PC-3 (cell line): ENCODE measurements at regions of chr14 and their contacts with region 1.

Region 1: GRCh38 chr14:54676812-54677708 is 110.1 kb downstream of the SAMD4A start:
- DNase-seq: peak; percentile 99
- ATAC-seq: peak; percentile 95
- H3K4me3 ChIP-seq: peak overlapping the region; percentile 46
- H3K27ac ChIP-seq: peak overlapping the region; percentile 80
- H3K4me1 ChIP-seq: peaks cover 49% of the 10 kb centered on the region
- H3K27me3 ChIP-seq: no peaks in the 10 kb centered on the region
- CTCF ChIP-seq: no peak

Region 2: DNA sequence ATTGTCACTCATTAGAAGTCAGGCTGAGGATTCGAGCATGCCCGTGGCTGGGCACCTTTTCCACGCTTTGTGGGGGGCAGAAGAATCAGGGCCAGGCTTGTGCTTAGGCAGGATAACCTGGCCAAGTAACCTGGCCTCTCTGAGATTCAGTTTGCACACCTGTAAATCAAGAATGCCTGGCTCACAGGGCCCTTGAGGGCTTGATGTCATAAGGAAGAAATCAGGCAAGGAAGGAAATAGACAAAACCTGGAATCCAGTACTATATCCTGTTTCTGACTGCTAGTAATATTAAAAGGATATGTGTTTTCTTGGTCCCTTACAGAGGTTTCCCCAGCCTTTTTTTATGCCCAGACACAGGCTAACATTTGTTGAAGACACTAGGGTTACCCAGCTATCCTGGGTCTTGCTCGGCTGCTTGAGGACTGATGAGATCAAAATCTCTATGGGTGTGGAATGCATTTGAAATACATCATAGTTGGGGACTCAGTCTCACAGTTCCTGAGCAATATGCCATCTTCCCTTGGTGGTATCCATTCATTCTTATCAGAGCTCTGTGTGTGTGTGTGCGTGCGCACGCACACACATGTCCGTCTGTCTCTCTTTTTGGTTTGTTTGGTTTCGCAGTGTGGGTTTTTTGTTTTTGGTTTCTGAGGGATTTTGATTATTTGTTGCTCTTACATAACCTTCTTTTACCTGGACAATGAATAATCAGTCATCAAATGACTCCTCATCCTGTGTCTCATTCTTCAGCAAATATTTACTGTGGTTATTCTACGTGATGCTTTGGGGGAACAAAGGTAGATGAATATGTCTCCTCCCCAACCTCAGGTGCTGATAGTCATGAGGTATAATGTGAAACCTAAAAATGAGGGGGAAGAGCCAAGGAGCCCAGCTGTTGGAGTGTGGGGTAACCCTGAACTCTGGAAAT is 18.0 kb before region 1 on chr14:
- CTCF ChIA-PET with region 1: no interaction called
- POLR2A ChIA-PET with region 1: interaction called, 6 read pairs
- intact Hi-C with region 1: loop called (anchors 1 kb)
- DNase-seq: peak; percentile 100
- ATAC-seq: peak; percentile 93
- H3K4me3 ChIP-seq: peak overlapping the region; percentile 5; the same call in 1 of the 2 replicates
- H3K27ac ChIP-seq: peak overlapping the region; percentile 87
- H3K4me1 ChIP-seq: peaks cover 41% of the 10 kb centered on the region
- H3K27me3 ChIP-seq: no peaks in the 10 kb centered on the region
- CTCF ChIP-seq: no peak

Region 3: GRCh38 chr14:54756656-54757392 is 79.8 kb after region 1 on chr14:
- CTCF ChIA-PET with region 1: no interaction called
- POLR2A ChIA-PET with region 1: no interaction called
- intact Hi-C with region 1: no loop called
- DNase-seq: no peak
- ATAC-seq: no peak
- H3K4me3 ChIP-seq: no peak overlapping the region
- H3K27ac ChIP-seq: no peak overlapping the region
- H3K4me1 ChIP-seq: no peaks in the 10 kb centered on the region
- H3K27me3 ChIP-seq: no peaks in the 10 kb centered on the region
- CTCF ChIP-seq: no peak